ENCODE measurements at regions of chr12 and their contacts with region 1.

Region 1: GRCh38 chr12:104381731-104382480 is 74.8 kb upstream of the CHST11 start:
- DNase-seq: peak; percentile 81
- ATAC-seq: peak; percentile 96
- H3K4me3 ChIP-seq: no peak overlapping the region
- H3K27ac ChIP-seq: no peak overlapping the region
- H3K4me1 ChIP-seq: peaks cover 8% of the 10 kb centered on the region
- H3K27me3 ChIP-seq: no peaks in the 10 kb centered on the region
- CTCF ChIP-seq: peak; percentile 95

Region 2: DNA sequence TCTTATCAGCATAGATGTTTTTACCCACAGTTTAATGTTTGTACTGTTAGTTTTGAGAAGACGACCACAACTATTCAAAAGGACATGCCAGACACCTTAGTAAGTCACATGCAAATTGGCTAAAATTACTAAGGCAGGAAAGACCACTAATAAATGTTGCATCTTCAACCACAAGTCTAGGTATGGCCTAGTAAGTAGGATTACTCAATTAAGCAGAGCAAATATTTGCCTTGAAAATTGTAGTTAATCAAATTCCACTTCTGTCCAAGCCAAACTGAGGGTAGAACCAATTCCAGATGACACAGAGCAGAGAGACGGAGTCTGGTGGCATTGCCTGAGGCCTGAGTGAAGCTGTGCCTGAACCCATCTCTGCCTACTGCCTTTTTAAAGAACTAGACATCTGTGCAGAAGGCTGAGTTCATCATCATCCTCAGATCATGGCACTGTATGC is 45.1 kb after region 1 on chr12:
- intact Hi-C with region 1: no loop called
- DNase-seq: no peak
- ATAC-seq: no peak
- H3K4me3 ChIP-seq: no peak overlapping the region
- H3K27ac ChIP-seq: no peak overlapping the region
- H3K4me1 ChIP-seq: no peaks in the 10 kb centered on the region
- H3K27me3 ChIP-seq: no peaks in the 10 kb centered on the region
- CTCF ChIP-seq: no peak

Region 3: DNA sequence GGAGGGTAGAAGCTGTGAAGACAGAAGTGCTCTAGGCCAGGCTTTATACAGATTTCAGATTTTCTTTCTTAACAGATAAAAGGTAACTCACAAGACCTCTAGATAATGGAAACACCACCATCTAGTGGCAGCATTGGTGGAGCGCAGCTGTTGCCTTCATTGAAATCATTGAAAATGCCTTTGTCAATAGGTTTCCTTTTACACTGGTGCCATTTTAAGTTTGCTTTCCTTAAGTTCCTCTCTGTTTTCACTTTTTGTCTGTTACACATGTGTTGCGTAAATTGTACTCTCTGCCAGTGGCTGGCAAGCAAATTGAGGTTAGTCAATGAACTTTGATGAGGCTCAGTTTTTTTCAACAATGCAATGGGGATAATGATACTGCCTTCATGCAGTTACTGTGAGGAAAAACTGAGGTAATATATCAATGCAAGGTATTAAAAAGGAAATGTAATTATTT is 671.2 kb after region 1 on chr12:
- intact Hi-C with region 1: loop called (anchors 10 kb)
- DNase-seq: peak; percentile 68
- ATAC-seq: peak; percentile 96
- H3K4me3 ChIP-seq: no peak overlapping the region
- H3K27ac ChIP-seq: no peak overlapping the region
- H3K4me1 ChIP-seq: no peaks in the 10 kb centered on the region
- H3K27me3 ChIP-seq: no peaks in the 10 kb centered on the region
- CTCF ChIP-seq: peak; percentile 98